Mucosa of descending colon (tissue), 3 donors: ENCODE measurements at regions of chr3 and their contacts with region 1.

Region 1: DNA sequence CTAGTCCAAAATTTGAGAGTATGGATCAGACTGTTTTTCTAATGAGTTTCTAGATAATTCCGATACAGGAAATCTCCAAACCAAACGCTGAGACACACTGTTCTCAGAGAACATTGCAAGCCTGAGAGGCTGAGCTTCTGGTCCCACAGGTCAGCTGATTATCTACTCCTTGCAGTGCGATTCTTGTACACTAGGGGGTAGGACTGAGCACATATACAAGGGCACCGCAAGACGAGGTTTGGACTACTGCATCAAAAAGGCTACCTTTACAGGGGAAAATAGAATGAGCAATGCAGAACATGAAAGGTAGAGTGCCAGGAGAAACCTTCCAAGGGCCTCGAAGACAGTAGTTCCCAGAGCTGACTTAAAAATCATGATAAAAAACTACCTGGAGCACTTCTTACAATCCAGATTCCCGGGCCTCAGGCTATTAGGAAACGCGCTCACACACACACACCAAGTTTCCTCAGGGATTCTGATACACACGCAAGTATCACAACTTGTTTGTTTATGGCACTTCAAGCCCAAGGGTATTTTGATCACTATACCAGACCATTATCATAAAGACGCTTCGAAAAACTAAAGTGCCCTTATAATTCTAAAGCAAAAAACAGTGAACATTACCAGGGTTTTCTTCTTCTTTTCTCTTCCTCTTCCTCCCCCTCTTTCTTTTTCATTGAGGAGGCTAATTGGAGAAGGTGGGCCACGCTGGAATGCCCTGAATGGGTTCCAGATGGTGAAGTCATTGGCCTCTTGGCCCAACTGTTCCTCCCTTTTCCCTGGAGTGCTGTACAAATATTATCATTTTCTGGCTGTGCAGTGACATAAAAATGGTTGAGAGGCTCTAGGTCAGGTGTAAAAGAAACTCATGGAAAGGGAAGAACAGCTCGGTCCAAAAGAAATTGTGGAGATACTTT is 61.8 kb downstream of the SLC12A8 start:
- DNase-seq: peak in 1 of 3 donors; percentile 86
- ATAC-seq: peak; percentile 82
- H3K4me3 ChIP-seq: no peak overlapping the region
- H3K4me1 ChIP-seq: no peaks in the 10 kb centered on the region
- CTCF ChIP-seq: peak; percentile 42

Region 2: DNA sequence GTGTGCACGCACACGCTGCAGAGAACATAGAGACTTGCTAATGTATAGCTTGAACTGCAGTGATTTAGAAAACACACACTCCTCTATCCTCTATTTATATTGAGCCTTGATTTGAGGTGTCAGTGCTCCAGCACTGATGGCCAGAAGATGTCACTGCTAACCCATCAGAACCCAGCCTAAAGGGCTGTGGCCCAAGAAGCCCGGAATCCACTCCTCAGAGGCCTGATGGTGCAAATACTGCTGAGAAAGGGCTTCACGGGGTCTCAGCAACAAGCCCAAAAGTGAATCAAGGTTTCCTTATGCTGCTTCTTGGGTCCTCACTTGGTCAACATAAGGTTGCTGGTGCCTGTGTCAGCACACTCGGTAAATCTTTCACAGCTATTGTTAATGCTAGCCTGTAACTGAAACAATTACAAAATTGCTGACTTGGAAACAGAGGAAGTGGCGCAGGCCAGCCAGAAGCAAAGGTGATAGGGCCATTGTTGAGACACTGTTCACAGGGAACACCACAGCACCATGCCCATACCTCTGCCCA is 155.3 kb before region 1 on chr3:
- intact Hi-C with region 1: loop called in 1 of 2 experiments (anchors 10 kb)
- DNase-seq: peak in 2 of 3 donors; percentile 59 to 76
- ATAC-seq: peak; percentile 80
- H3K4me3 ChIP-seq: no peak overlapping the region
- H3K4me1 ChIP-seq: no peaks in the 10 kb centered on the region
- CTCF ChIP-seq: peak; percentile 52

Region 3: DNA sequence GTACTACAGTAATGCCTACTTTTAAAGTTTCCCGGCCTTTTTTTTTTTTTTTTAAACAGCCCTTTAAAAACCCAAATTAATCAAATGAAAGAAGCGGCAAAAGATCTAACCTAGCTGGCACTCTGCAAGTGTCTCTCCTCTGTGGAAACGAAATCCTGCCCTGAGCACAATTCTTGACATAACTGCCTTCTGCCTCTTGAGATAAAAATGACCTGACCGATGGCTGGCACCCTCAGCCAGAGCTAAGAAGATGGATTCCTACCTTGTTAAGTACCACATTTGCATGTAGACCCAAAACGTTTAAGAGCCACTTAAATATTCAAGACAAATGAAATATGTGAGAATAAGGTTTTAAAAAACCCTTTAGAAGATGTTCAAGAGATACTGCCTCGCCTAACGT is 78.4 kb after region 1 on chr3:
- intact Hi-C with region 1: no loop called
- DNase-seq: no peak
- ATAC-seq: no peak
- H3K4me3 ChIP-seq: no peak overlapping the region
- H3K4me1 ChIP-seq: no peaks in the 10 kb centered on the region
- CTCF ChIP-seq: no peak

Region 4: GRCh38 chr3:125240496-125240895 is 89.7 kb after region 1 on chr3:
- intact Hi-C with region 1: no loop called
- DNase-seq: no peak
- ATAC-seq: no peak
- H3K4me3 ChIP-seq: no peak overlapping the region
- H3K4me1 ChIP-seq: no peaks in the 10 kb centered on the region
- CTCF ChIP-seq: no peak

Region 5: GRCh38 chr3:125322166-125322565 is 171.4 kb after region 1 on chr3:
- intact Hi-C with region 1: loop called in 1 of 2 experiments (anchors 5 kb)
- DNase-seq: no peak
- ATAC-seq: no peak
- H3K4me3 ChIP-seq: no peak overlapping the region
- H3K4me1 ChIP-seq: no peaks in the 10 kb centered on the region
- CTCF ChIP-seq: no peak